ENCODE measurements at regions of chr9 and their contacts with region 1.

Region 1: GRCh38 chr9:135797507-135798262 is 95.7 kb downstream of the KCNT1 start:
- H3K4me3 ChIP-seq: no peak overlapping the region
- H3K27ac ChIP-seq: no peak overlapping the region
- H3K4me1 ChIP-seq: no peaks in the 10 kb centered on the region
- CTCF ChIP-seq: peak; percentile 78

Region 2: GRCh38 chr9:135811801-135812200 is 14.1 kb after region 1 on chr9:
- CTCF ChIA-PET with region 1: interaction called, 23 read pairs
- POLR2A ChIA-PET with region 1: no interaction called
- H3K4me3 ChIP-seq: no peak overlapping the region
- H3K27ac ChIP-seq: no peak overlapping the region
- H3K4me1 ChIP-seq: no peaks in the 10 kb centered on the region
- CTCF ChIP-seq: no peak

Region 3: DNA sequence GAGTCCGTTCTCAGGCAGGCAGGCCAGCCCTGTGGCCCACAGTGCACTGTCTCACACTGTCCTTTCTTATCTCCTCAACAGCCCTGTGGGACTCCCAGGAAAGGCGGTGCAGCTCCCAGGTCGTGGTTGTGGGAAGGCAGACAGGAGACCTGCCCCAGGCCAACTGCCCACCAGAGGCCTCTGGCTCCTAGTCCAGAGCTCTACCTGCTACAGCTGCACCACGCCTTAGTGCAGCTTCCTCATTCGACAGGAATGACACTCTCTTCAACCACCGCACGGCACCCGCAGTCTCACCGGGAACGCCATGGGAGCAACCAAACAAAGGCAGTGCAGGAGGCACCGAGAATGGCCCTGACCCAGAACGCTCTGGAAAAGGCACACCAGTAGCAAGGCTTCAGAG is 84.3 kb after region 1 on chr9:
- CTCF ChIA-PET with region 1: no interaction called
- POLR2A ChIA-PET with region 1: no interaction called
- H3K4me3 ChIP-seq: no peak overlapping the region
- H3K27ac ChIP-seq: no peak overlapping the region
- H3K4me1 ChIP-seq: peaks cover 2% of the 10 kb centered on the region; the same call in 1 of the 2 replicates
- CTCF ChIP-seq: no peak

Region 4: GRCh38 chr9:135928113-135929091 is 130.7 kb after region 1 on chr9:
- CTCF ChIA-PET with region 1: no interaction called
- POLR2A ChIA-PET with region 1: no interaction called
- H3K4me3 ChIP-seq: no peak overlapping the region
- H3K27ac ChIP-seq: no peak overlapping the region
- H3K4me1 ChIP-seq: no peaks in the 10 kb centered on the region
- CTCF ChIP-seq: no peak

Region 5: DNA sequence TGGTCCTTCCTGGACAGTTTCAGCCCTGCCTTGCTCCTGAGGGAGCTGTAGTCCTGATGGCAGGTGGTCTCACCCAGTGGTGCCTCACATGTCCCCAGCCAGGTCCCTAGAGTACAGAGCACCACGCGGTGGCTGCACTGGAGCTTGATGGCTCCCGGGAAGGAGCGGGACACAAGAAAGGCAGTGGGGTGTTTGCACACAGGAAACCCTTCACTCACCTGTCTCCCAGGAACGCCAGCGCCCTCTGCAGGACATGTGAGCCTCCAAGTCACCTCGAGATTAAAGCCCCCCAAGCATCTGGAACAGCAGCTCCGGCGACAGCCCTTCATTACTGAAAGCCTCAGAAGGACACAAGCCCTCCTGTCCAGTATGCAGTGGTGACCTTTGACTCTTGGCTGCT is 340.9 kb after region 1 on chr9:
- CTCF ChIA-PET with region 1: interaction called, 11 read pairs
- POLR2A ChIA-PET with region 1: interaction called, 3 read pairs
- H3K4me3 ChIP-seq: no peak overlapping the region
- H3K27ac ChIP-seq: no peak overlapping the region
- H3K4me1 ChIP-seq: no peaks in the 10 kb centered on the region
- CTCF ChIP-seq: peak; percentile 29; the same call in 1 of the 2 replicates